Esophagus muscularis mucosa (tissue), 4 donors: ENCODE measurements at regions of chr4 and their contacts with region 1.

Region 1: GRCh38 chr4:47933840-47934239 is 19.5 kb upstream of the NFXL1 start:
- DNase-seq: no peak
- H3K4me3 ChIP-seq: no peak overlapping the region
- H3K27ac ChIP-seq: no peak overlapping the region
- H3K4me1 ChIP-seq: peaks cover 0 to 3% (median 0%) of the 10 kb centered on the region in 4 donors
- H3K27me3 ChIP-seq: no peaks in the 10 kb centered on the region
- CTCF ChIP-seq: peak; percentile 60 to 67 (median 65)
- EP300 ChIP-seq: no peak
- POLR2A ChIP-seq: no peak

Region 2: GRCh38 chr4:47668810-47669408 is 264.9 kb before region 1 on chr4:
- intact Hi-C with region 1: loop called (anchors 2 kb)
- DNase-seq: no peak
- H3K4me3 ChIP-seq: no peak overlapping the region
- H3K27ac ChIP-seq: no peak overlapping the region
- H3K4me1 ChIP-seq: no peaks in the 10 kb centered on the region
- H3K27me3 ChIP-seq: no peaks in the 10 kb centered on the region
- CTCF ChIP-seq: peak; percentile 54 to 69 (median 60)
- EP300 ChIP-seq: no peak
- POLR2A ChIP-seq: no peak

Region 3: DNA sequence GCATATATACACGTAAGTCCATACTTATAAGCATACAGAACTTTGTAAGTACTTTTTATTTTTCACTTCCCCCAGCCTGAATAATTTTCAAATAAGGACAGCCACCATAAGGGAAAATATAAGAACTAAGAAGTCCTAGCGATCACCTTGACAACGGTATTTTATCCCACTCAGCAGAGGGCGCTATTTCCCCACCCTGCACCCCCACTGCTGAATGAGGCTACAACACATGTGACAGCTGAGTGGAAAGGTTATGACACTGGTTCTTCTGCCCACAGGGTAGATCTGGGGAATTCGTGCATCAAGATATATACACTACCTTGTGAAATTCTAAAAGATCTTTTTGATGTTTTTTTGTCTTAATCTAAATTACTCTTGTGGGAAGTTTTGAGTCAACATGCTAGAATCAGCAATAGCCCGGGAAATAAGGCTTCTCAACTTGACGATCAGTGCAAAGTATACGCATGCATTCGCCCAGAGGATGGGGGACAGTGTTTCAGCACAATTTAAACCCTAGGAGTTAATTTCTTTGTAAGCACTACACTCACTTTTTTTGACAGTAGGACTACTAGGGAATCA is 247.5 kb before region 1 on chr4:
- intact Hi-C with region 1: loop called (anchors 5 kb)
- DNase-seq: no peak
- H3K4me3 ChIP-seq: no peak overlapping the region
- H3K27ac ChIP-seq: no peak overlapping the region
- H3K4me1 ChIP-seq: no peaks in the 10 kb centered on the region
- H3K27me3 ChIP-seq: no peaks in the 10 kb centered on the region
- CTCF ChIP-seq: peak; percentile 41 to 56 (median 55)
- EP300 ChIP-seq: no peak
- POLR2A ChIP-seq: no peak